Endothelial cell of umbilical vein (primary cell): ENCODE measurements at regions of chr18 and their contacts with region 1.

Region 1: GRCh38 chr18:33495278-33495677 is 54.8 kb upstream of the CCDC178 start:
- DNase-seq: peak; percentile 10
- H3K4me3 ChIP-seq: no peak overlapping the region
- H3K27ac ChIP-seq: no peak overlapping the region
- H3K4me1 ChIP-seq: no peaks in the 10 kb centered on the region
- H3K27me3 ChIP-seq: peaks cover 0 to 3% of the 10 kb centered on the region in 2 experiments
- CTCF ChIP-seq: peak; percentile 15 to 36
- POLR2A ChIP-seq: no peak

Region 2: DNA sequence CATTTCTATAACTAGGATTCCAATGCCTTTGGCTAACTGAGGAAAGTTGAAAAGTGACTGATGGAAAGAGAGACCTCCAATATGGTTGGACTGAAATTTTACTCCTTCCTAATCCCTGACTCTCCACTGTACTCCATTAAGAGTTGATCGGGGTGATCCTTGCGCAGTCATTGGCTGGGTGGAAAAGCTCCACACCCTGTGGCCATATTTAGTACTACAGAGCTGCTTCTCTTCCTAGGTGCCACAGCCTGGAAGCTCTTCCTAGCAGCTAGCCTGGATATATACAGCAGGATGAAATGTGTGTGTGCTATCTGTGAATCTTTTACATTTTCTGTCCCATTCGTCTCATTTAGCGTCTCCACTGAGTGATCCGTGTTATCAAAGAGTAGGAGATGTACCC is 1234.3 kb before region 1 on chr18:
- CTCF ChIA-PET with region 1: no interaction called
- POLR2A ChIA-PET with region 1: no interaction called
- dilution Hi-C with region 1: no loop called
- intact Hi-C with region 1: no loop called
- DNase-seq: no peak
- H3K4me3 ChIP-seq: no peak overlapping the region
- H3K27ac ChIP-seq: no peak overlapping the region
- H3K4me1 ChIP-seq: no peaks in the 10 kb centered on the region
- H3K27me3 ChIP-seq: no peaks in the 10 kb centered on the region
- CTCF ChIP-seq: no peak
- POLR2A ChIP-seq: no peak

Region 3: GRCh38 chr18:32714571-32715148 is 780.6 kb before region 1 on chr18:
- CTCF ChIA-PET with region 1: no interaction called
- POLR2A ChIA-PET with region 1: no interaction called
- dilution Hi-C with region 1: no loop called
- intact Hi-C with region 1: loop called (anchors 1 kb)
- DNase-seq: peak; percentile 81
- H3K4me3 ChIP-seq: no peak overlapping the region
- H3K27ac ChIP-seq: no peak overlapping the region
- H3K4me1 ChIP-seq: no peaks in the 10 kb centered on the region
- H3K27me3 ChIP-seq: peaks cover 2 to 5% of the 10 kb centered on the region in 2 experiments
- CTCF ChIP-seq: peak; percentile 67 to 70
- POLR2A ChIP-seq: no peak

Region 4: GRCh38 chr18:33210575-33211189 is 284.6 kb before region 1 on chr18:
- CTCF ChIA-PET with region 1: interaction called, 3 read pairs
- POLR2A ChIA-PET with region 1: no interaction called
- dilution Hi-C with region 1: no loop called
- intact Hi-C with region 1: loop called (anchors 5 kb)
- DNase-seq: peak; percentile 36
- H3K4me3 ChIP-seq: no peak overlapping the region
- H3K27ac ChIP-seq: no peak overlapping the region
- H3K4me1 ChIP-seq: no peaks in the 10 kb centered on the region
- H3K27me3 ChIP-seq: no peaks in the 10 kb centered on the region
- CTCF ChIP-seq: peak; percentile 46 to 58
- POLR2A ChIP-seq: no peak

Region 5: DNA sequence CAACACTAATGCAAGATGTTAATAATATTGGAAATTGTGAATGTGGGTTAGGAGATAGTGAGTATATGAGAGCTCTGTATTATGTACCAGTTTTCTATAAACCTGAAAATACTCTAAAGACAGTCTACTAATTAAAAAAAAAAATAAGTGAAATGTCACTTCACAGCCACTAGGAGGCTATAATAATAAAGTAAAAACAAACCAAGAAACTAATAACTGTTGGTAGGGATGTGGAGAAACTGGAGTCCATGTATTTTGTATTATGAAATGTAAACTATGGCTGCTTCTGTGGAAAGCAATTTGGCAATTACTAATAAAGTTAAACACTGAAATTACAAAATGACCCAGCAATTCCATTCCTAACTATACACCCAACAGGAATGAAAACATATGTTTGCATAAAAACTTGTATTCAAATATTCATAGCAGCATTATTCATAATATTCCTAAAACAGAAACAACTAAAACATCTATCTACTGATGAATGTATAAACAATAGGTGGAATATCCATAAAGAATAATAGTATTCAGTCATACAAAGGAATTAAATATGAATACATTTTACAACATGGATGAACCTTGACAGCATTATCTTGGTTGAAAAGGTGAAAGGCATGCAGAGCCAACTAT is 90.9 kb before region 1 on chr18:
- CTCF ChIA-PET with region 1: no interaction called
- POLR2A ChIA-PET with region 1: no interaction called
- dilution Hi-C with region 1: no loop called
- intact Hi-C with region 1: loop called (anchors 1 kb)
- DNase-seq: peak; percentile 2
- H3K4me3 ChIP-seq: no peak overlapping the region
- H3K27ac ChIP-seq: no peak overlapping the region
- H3K4me1 ChIP-seq: no peaks in the 10 kb centered on the region
- H3K27me3 ChIP-seq: no peaks in the 10 kb centered on the region
- CTCF ChIP-seq: peak in 1 of 2 donors; percentile 23
- POLR2A ChIP-seq: no peak

Region 6: GRCh38 chr18:33440060-33441043 is 54.9 kb before region 1 on chr18 and contains the start of gene CCDC178:
- CTCF ChIA-PET with region 1: no interaction called
- POLR2A ChIA-PET with region 1: no interaction called
- dilution Hi-C with region 1: no loop called
- intact Hi-C with region 1: loop called (anchors 1 kb)
- DNase-seq: peak; percentile 46
- H3K4me3 ChIP-seq: peak within 1 kb of the TSS; percentile 37 to 56 (median 45)
- H3K27ac ChIP-seq: no peak within 1 kb of the TSS
- H3K4me1 ChIP-seq: no peaks in the 10 kb centered on the region
- H3K27me3 ChIP-seq: peaks cover 8 to 38% of the 10 kb centered on the region in 2 experiments
- CTCF ChIP-seq: peak; percentile 25 to 59
- POLR2A ChIP-seq: no peak
- total RNA-seq, gene CCDC178: 0.80 and 1.3 TPM in 2 replicates